Activated T-helper 1 cell treated with anti-CD3 and anti-CD28 coated beads, Interleukin-12 subunit alpha, Interleukin-12 subunit beta, Interleukin-2, Interleukin-4 antibody, amounts not matched to agents 30 ng/mL and 10 ng/mL and 1 ng/mL, durations not matched to agents 14 hours and 24 hours and 36 hours (primary cell): ENCODE measurements at regions of chr9 and their contacts with region 1.

Region 1: GRCh38 chr9:12538842-12539579 is 154.2 kb upstream of the TYRP1 start:
- DNase-seq: no peak
- H3K4me3 Mint-ChIP-seq: no peak overlapping the region
- H3K27ac Mint-ChIP-seq: no peak overlapping the region
- H3K4me1 Mint-ChIP-seq: no peaks in the 10 kb centered on the region
- H3K27me3 Mint-ChIP-seq: no peaks in the 10 kb centered on the region

Region 2: GRCh38 chr9:12584656-12585522 is 45.9 kb after region 1 on chr9:
- intact Hi-C with region 1: loop called (anchors 10 kb)
- DNase-seq: no peak
- H3K4me3 Mint-ChIP-seq: no peak overlapping the region
- H3K27ac Mint-ChIP-seq: no peak overlapping the region
- H3K4me1 Mint-ChIP-seq: no peaks in the 10 kb centered on the region
- H3K27me3 Mint-ChIP-seq: no peaks in the 10 kb centered on the region